IMR-90 (cell line): ENCODE measurements at regions of chr6 and their contacts with region 1.

Region 1: GRCh38 chr6:41787219-41787917 is at the start of gene TOMM6:
- DNase-seq: peak; percentile 94
- ATAC-seq: peak; percentile 84
- H3K4me3 ChIP-seq: peak within 1 kb of the TSS; percentile 97
- H3K27ac ChIP-seq: peak within 1 kb of the TSS; percentile 94
- H3K4me1 ChIP-seq: peaks cover 7% of the 10 kb centered on the region
- H3K27me3 ChIP-seq: no peaks in the 10 kb centered on the region
- CTCF ChIP-seq: peak; percentile 95
- POLR2A ChIP-seq: peak; percentile 89
- RAD21 ChIP-seq: peak; percentile 4; the same call in 1 of the 2 replicates
- total RNA-seq, gene TOMM6: 120 and 128 TPM in 2 replicates

Region 2: GRCh38 chr6:41920921-41921711 is 133.7 kb after region 1 on chr6 and contains the starts of genes BYSL and MED20:
- CTCF ChIA-PET with region 1: interaction called, 6 read pairs
- POLR2A ChIA-PET with region 1: no interaction called
- dilution Hi-C with region 1: no loop called
- in situ Hi-C with region 1: no loop called
- intact Hi-C with region 1: loop called (anchors 2 kb)
- DNase-seq: peak; percentile 94
- ATAC-seq: peak; percentile 89
- H3K4me3 ChIP-seq: peak within 1 kb of the TSS; percentile 93
- H3K27ac ChIP-seq: peak within 1 kb of the TSS; percentile 99
- H3K4me1 ChIP-seq: peaks cover 10% of the 10 kb centered on the region
- H3K27me3 ChIP-seq: no peaks in the 10 kb centered on the region
- CTCF ChIP-seq: peak; percentile 95
- POLR2A ChIP-seq: peak; percentile 78
- RAD21 ChIP-seq: no peak
- total RNA-seq, gene BYSL: 25.3 and 26.7 TPM in 2 replicates
- total RNA-seq, gene MED20: 35.6 and 38.2 TPM in 2 replicates

Region 3: GRCh38 chr6:42166444-42167141 is 379.2 kb after region 1 on chr6:
- CTCF ChIA-PET with region 1: no interaction called
- POLR2A ChIA-PET with region 1: no interaction called
- dilution Hi-C with region 1: no loop called
- in situ Hi-C with region 1: no loop called
- intact Hi-C with region 1: loop called (anchors 10 kb)
- DNase-seq: peak; percentile 55
- ATAC-seq: peak; percentile 89
- H3K4me3 ChIP-seq: no peak overlapping the region
- H3K27ac ChIP-seq: no peak overlapping the region
- H3K4me1 ChIP-seq: peaks cover 9% of the 10 kb centered on the region
- H3K27me3 ChIP-seq: no peaks in the 10 kb centered on the region
- CTCF ChIP-seq: peak; percentile 94
- POLR2A ChIP-seq: peak; percentile 50; the same call in 1 of the 2 replicates
- RAD21 ChIP-seq: peak; percentile 97

Region 4: DNA sequence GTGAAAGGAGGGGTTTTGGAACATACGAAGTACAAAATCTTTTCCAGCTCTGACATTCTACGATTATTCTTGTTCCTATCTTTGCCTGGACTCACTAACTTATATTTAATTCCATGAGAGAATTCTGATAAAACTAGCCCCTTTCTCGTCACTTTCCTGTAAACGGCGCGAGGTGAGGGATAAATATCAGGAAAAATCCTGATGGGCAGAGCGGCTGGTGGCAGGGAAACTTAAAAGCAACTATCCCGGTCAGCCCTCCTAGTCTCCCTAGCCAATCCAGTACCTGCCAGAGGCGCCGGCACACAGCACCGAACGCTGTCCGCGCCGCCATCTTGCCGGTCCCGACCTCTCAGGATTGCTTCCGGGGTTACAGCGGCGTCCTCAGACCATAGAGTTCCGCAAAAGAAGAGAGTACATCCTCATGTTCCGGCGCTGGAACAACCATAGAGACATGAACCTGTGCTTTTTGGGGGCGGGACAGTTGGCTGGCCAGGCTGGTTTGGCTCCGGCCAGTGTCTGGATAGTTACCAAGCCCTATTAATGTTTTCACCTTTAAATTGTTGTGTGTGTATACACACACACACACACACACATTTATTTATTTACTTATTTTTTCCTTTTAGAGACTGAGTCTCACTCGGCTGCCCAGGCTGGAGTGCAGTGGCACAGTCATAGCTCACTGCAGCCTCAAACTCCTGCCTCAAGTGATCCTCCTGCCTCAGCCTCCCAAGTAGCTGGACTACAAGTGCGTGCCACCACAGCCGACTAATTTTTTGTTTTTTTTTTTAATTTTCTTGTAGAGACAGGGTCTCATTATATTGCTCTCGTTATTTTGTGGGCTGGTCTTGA is 430.4 kb after region 1 on chr6 and contains the start of gene MRPS10:
- CTCF ChIA-PET with region 1: no interaction called
- POLR2A ChIA-PET with region 1: no interaction called
- dilution Hi-C with region 1: no loop called
- in situ Hi-C with region 1: no loop called
- intact Hi-C with region 1: loop called (anchors 10 kb)
- DNase-seq: peak; percentile 94
- ATAC-seq: peak; percentile 98
- H3K4me3 ChIP-seq: peak within 1 kb of the TSS; percentile 82
- H3K27ac ChIP-seq: peak within 1 kb of the TSS; percentile 83
- H3K4me1 ChIP-seq: peaks cover 2% of the 10 kb centered on the region; the same call in 1 of the 2 replicates
- H3K27me3 ChIP-seq: no peaks in the 10 kb centered on the region
- CTCF ChIP-seq: no peak
- POLR2A ChIP-seq: peak; percentile 85
- RAD21 ChIP-seq: no peak
- total RNA-seq, gene MRPS10: 47.0 and 71.1 TPM in 2 replicates